ENCODE measurements at regions of chr22 and their contacts with region 1.

Region 1: DNA sequence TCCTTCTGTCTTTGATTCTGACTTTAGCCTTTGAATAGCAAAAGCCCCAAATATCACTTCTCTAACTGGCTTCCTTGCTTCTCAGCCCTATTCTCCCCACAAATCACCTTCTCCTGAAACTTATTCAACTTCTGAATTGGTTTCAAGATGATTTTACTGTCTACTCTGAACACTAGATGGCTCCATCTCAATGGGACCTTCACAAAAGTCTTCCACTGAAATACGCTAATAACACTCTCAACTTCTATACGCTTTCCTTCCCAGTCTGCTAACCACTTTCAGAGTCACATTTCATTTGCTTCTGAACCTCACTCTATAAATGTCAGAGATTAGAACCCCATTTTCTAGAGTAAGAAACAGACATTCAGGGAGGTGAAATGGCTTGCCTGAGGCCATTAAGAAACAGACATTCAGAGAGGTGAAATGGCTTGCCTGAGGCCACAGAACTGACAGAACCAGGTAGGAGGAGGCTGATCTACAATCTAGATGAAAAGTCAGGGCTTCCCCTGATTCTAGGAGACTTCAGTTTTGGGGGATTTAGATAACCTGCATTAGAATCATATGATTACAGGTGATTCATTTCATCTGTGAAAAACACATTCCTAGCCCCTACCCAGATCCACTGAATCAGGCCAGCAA is 20.6 kb downstream of the MORC2 start:
- DNase-seq: no peak
- H3K4me3 ChIP-seq: peak overlapping the region in 3 of 59 donors; percentile 2 to 6 (median 6)
- H3K27ac ChIP-seq: peak overlapping the region in 54 of 59 donors; percentile 0 to 87 (median 68)
- H3K27me3 ChIP-seq: no peaks in the 10 kb centered on the region
- CTCF ChIP-seq: peak; percentile 48 to 83 (median 66)

Region 2: GRCh38 chr22:30763815-30764686 is 183.9 kb before region 1 on chr22:
- intact Hi-C with region 1: no loop called
- DNase-seq: peak in 6 of 10 donors; percentile 33 to 82 (median 54)
- H3K4me3 ChIP-seq: no peak overlapping the region
- H3K27ac ChIP-seq: no peak overlapping the region
- H3K27me3 ChIP-seq: no peaks in the 10 kb centered on the region
- CTCF ChIP-seq: peak in 54 of 56 donors; percentile 41 to 78 (median 64)

Region 3: GRCh38 chr22:31230871-31231621 is 283.1 kb after region 1 on chr22:
- intact Hi-C with region 1: loop called (anchors 5 to 10 kb)
- DNase-seq: peak in 5 of 10 donors; percentile 20 to 60 (median 47)
- H3K4me3 ChIP-seq: peak overlapping the region in 1 of 59 donors; percentile 13
- H3K27ac ChIP-seq: peak overlapping the region in 44 of 59 donors; percentile 4 to 87 (median 59)
- H3K27me3 ChIP-seq: no peaks in the 10 kb centered on the region
- CTCF ChIP-seq: peak in 55 of 56 donors; percentile 32 to 81 (median 66)

Measured in dorsolateral prefrontal cortex (tissue), 120 donors.